ENCODE measurements at regions of chr6 and their contacts with region 1.

Region 1: DNA sequence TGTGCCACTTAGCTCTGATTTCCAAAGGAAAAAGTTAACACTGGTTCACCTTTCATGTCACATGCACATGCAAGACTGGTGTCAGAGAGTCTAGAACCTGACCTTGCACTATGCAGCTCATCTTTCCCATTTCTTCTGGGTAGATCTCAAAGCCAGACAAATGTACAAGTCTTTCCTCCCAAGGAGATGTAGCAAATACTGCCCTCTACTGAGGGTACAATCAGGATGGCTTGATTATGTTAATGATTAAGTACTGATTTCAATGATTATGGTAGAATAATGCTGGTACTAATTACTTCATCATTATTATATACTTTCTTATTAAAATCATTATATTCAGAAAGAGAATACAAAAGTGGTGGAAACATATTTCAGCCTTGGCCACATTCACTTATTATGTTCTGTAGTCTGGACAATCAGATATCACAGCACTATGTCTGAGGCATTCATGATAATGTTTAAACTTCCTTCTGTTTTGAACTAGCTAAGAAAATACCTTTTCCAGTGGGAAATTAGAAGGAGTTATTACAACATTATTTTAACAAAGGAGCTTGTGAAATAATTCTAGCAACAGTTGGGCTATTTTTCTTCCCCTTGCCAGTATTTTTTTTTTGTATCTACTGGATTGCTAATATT is 68.5 kb upstream of the FOXO3 start:
- DNase-seq: peak; percentile 77
- H3K4me3 ChIP-seq: no peak overlapping the region
- H3K27ac ChIP-seq: no peak overlapping the region
- H3K4me1 ChIP-seq: no peaks in the 10 kb centered on the region
- H3K27me3 ChIP-seq: no peaks in the 10 kb centered on the region
- CTCF ChIP-seq: peak; percentile 47 to 54
- POLR2A ChIP-seq: no peak

Region 2: DNA sequence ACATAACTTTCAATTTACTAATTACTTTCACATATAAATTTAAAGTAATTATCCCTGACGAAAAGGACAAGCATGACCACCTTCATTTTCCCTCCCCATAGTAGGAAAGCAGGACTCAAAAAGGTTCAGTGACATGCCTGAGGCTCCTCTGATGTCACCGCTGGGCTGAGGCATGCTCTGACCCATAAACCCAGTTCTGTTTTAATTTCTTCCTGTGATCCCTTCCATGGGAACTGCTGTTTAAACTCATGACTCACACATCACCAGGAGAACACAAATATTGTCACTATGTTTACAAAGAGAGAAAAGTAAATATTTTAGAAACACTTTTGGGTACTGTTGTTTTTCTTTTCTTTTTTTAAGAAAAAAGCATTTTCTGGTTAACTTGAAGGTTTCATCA is 364.4 kb before region 1 on chr6:
- CTCF ChIA-PET with region 1: interaction called, 12 read pairs
- POLR2A ChIA-PET with region 1: no interaction called
- dilution Hi-C with region 1: no loop called
- intact Hi-C with region 1: no loop called
- DNase-seq: no peak
- H3K4me3 ChIP-seq: no peak overlapping the region
- H3K27ac ChIP-seq: no peak overlapping the region
- H3K4me1 ChIP-seq: no peaks in the 10 kb centered on the region
- H3K27me3 ChIP-seq: peaks cover 50 to 61% of the 10 kb centered on the region in 2 experiments
- CTCF ChIP-seq: no peak
- POLR2A ChIP-seq: no peak

Region 3: GRCh38 chr6:108215546-108215945 is 276.7 kb before region 1 on chr6:
- CTCF ChIA-PET with region 1: interaction called, 17 read pairs
- POLR2A ChIA-PET with region 1: no interaction called
- dilution Hi-C with region 1: no loop called
- intact Hi-C with region 1: no loop called
- DNase-seq: no peak
- H3K4me3 ChIP-seq: no peak overlapping the region
- H3K27ac ChIP-seq: no peak overlapping the region
- H3K4me1 ChIP-seq: no peaks in the 10 kb centered on the region
- H3K27me3 ChIP-seq: no peaks in the 10 kb centered on the region
- CTCF ChIP-seq: no peak
- POLR2A ChIP-seq: no peak

Region 4: DNA sequence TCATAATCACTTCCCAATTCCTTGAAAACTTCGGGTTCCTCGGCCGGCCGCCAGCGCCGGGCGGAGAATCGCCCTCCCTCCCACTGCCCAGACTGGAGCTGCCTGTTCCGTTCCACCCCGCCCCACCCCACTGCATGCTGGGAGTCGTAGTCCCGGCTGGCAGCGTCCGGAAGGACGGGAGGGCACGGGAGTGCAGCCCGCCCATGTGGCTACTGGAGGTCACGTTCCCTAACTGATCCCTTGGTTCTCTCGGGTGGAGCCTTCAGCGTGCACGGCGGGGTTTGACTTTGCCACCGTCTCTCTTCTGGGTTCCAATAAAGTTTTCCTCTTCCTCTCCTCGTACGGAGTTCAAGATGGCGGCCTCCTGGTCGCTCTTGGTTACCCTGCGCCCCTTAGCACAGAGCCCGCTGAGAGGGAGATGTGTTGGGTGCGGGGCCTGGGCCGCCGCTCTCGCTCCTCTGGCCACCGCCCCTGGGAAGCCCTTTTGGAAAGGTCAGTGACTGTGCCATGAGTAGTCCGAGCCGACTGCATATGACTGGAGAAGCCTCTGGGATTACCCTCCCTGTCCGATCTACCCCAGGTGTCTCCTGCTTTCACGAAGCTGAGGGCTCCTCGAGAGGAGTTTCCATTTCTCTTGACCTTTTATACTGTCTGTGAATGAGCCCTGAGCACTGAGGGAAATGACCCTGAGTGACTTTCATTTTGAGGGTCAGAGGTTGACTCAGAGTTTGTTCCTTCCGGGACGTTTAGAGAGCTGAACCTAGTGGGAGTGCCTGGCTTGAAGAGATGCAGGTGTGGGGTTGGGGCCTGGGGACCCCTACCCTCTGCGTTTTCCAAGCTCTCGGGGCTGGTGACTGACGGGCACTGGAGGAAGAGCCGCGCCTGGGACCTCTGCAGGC is 197.3 kb before region 1 on chr6 and contains the start of gene AFG1L:
- CTCF ChIA-PET with region 1: interaction called, 22 read pairs
- POLR2A ChIA-PET with region 1: no interaction called
- dilution Hi-C with region 1: no loop called
- intact Hi-C with region 1: loop called (anchors 2 kb)
- DNase-seq: peak; percentile 90
- H3K4me3 ChIP-seq: peak within 1 kb of the TSS; percentile 51 to 72 (median 58)
- H3K27ac ChIP-seq: peak within 1 kb of the TSS; percentile 72
- H3K4me1 ChIP-seq: peaks cover 10% of the 10 kb centered on the region
- H3K27me3 ChIP-seq: no peaks in the 10 kb centered on the region
- CTCF ChIP-seq: no peak
- POLR2A ChIP-seq: peak; percentile 49
- total RNA-seq, gene AFG1L: 6.0 and 6.2 TPM in 2 replicates

Region 5: DNA sequence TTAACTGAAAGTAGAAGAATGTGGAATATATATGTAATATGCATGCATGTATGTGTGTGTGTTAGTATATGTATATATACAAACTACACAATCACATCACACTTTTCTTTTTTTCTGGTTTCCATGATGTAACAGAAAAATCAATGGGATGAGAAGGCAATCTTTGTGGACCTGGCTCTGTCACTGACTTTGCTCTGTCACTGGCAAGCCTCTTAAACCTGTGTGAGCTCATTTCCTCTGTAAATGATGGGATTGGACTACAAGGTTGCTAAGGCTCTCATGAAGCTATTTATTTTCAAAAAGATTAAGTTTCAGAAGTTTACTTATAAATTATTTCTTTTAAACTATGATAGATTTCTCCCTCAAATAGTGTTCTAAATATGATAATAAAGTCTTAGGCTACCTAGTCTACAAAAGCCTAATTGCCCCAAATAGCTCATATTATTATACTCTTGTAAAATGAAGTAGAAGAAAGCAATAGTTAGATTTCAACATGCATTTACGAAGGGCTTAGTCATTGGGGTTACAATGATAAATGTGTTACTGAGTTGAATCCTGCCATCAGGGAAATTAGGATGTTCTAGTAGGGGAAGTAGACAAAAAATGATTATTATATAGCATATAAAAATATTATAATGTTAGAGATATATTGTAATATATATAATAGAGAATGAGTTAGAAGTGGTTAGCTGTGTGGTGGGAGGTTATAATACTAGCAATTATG is 68.1 kb before region 1 on chr6:
- CTCF ChIA-PET with region 1: interaction called, 22 read pairs
- POLR2A ChIA-PET with region 1: no interaction called
- dilution Hi-C with region 1: no loop called
- intact Hi-C with region 1: no loop called
- DNase-seq: no peak
- H3K4me3 ChIP-seq: no peak overlapping the region
- H3K27ac ChIP-seq: no peak overlapping the region
- H3K4me1 ChIP-seq: no peaks in the 10 kb centered on the region
- H3K27me3 ChIP-seq: no peaks in the 10 kb centered on the region
- CTCF ChIP-seq: no peak
- POLR2A ChIP-seq: no peak

Region 6: GRCh38 chr6:108464418-108465093 is 27.7 kb before region 1 on chr6:
- CTCF ChIA-PET with region 1: interaction called, 23 read pairs
- POLR2A ChIA-PET with region 1: no interaction called
- dilution Hi-C with region 1: no loop called
- intact Hi-C with region 1: no loop called
- DNase-seq: no peak
- H3K4me3 ChIP-seq: no peak overlapping the region
- H3K27ac ChIP-seq: no peak overlapping the region
- H3K4me1 ChIP-seq: peaks cover 6% of the 10 kb centered on the region
- H3K27me3 ChIP-seq: no peaks in the 10 kb centered on the region
- CTCF ChIP-seq: no peak
- POLR2A ChIP-seq: no peak